ENCODE measurements at regions of chr2 and their contacts with region 1.

Region 1: GRCh38 chr2:127701193-127701650 is at the start of gene SFT2D3:
- DNase-seq: peak; percentile 91
- H3K4me3 ChIP-seq: peak within 1 kb of the TSS; percentile 40 to 79 (median 45)
- H3K27ac ChIP-seq: peak within 1 kb of the TSS; percentile 85
- H3K4me1 ChIP-seq: peaks cover 17% of the 10 kb centered on the region
- H3K27me3 ChIP-seq: no peaks in the 10 kb centered on the region
- CTCF ChIP-seq: no peak
- POLR2A ChIP-seq: peak; percentile 99
- total RNA-seq, gene SFT2D3: 4.4 and 4.7 TPM in 2 replicates

Region 2: GRCh38 chr2:127508631-127509034 is 192.6 kb before region 1 on chr2:
- CTCF ChIA-PET with region 1: interaction called, 9 read pairs
- POLR2A ChIA-PET with region 1: no interaction called
- dilution Hi-C with region 1: no loop called
- intact Hi-C with region 1: loop called (anchors 5 kb)
- DNase-seq: peak; percentile 93
- H3K4me3 ChIP-seq: no peak overlapping the region
- H3K27ac ChIP-seq: peak overlapping the region; percentile 54
- H3K4me1 ChIP-seq: peaks cover 36% of the 10 kb centered on the region
- H3K27me3 ChIP-seq: no peaks in the 10 kb centered on the region
- CTCF ChIP-seq: no peak
- POLR2A ChIP-seq: no peak